ENCODE measurements at regions of chr10 and their contacts with region 1.

Region 1: GRCh38 chr10:95363303-95363912 is 72.6 kb upstream of the PDLIM1 start:
- DNase-seq: peak in 3 of 6 donors; percentile 28 to 57 (median 29)
- ATAC-seq: peak; percentile 77 to 91 (median 86)
- H3K4me3 ChIP-seq: no peak overlapping the region
- H3K27ac ChIP-seq: no peak overlapping the region
- H3K4me1 ChIP-seq: no peaks in the 10 kb centered on the region
- H3K27me3 ChIP-seq: no peaks in the 10 kb centered on the region
- CTCF ChIP-seq: peak; percentile 51 to 85 (median 78)

Region 2: DNA sequence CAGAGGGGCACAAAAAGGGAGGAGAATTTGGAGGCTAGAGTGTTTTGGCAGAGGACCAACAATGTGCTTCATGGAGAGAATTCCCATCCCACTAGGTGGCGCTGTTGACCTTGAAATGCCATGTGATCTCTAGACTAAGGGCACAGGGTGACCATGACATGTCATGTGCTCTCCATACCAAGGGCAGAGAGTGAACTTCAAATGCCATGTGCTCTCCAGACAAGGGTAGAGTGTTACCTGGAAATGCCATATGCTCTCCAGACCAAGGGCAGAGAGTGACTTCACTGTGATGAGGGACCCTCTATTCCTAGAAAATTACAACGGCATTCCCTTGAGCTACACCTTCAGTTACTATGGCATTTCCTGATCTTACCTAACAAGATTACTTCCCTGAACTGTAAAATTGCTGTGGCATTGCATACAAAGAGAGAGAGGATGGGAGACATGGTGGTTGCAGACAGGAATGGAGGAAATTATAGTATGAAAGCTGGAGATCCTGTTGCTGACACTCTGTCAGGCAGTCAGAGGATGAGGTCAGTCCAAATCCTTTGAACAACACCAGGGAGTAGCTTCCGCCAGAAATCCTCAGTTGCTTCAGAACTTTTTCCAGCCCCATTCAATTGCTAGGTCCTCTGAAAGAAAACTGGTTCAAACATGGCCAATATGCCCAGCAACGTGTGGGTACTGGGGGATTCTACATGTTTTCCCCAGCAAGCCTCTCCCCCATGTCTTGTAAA is 230.2 kb before region 1 on chr10:
- intact Hi-C with region 1: loop called in 1 of 3 experiments (anchors 10 kb)
- DNase-seq: peak; percentile 35 to 90 (median 82)
- ATAC-seq: peak; percentile 92 to 100 (median 98)
- H3K4me3 ChIP-seq: no peak overlapping the region
- H3K27ac ChIP-seq: no peak overlapping the region
- H3K4me1 ChIP-seq: no peaks in the 10 kb centered on the region
- H3K27me3 ChIP-seq: no peaks in the 10 kb centered on the region
- CTCF ChIP-seq: peak; percentile 64 to 73 (median 69)

Measured in pancreas (tissue), 10 donors.